K562 (cell line): ENCODE measurements at regions of chr5 and their contacts with region 1.

Region 1: GRCh38 chr5:150560401-150561193 is 52.7 kb downstream of the NDST1 start:
- DNase-seq: peak; percentile 87 to 90 (median 90)
- ATAC-seq: peak; percentile 96
- H3K4me3 ChIP-seq: no peak overlapping the region
- H3K27ac ChIP-seq: no peak overlapping the region
- H3K4me1 ChIP-seq: peaks cover 0 to 4% of the 10 kb centered on the region in 2 experiments; a peak in 1 of 5 replicates
- H3K27me3 ChIP-seq: no peaks in the 10 kb centered on the region
- CTCF ChIP-seq: peak; percentile 78 to 93 (median 87)
- EP300 ChIP-seq: peak; percentile 40; the same call in 1 of the 2 replicates
- POLR2A ChIP-seq: no peak
- RAD21 ChIP-seq: peak; percentile 92 to 95

Region 2: GRCh38 chr5:150497274-150497988 is 63.2 kb before region 1 on chr5:
- CTCF ChIA-PET with region 1: no interaction called
- POLR2A ChIA-PET with region 1: no interaction called
- in situ Hi-C with region 1: no loop called
- intact Hi-C with region 1: no loop called
- DNase-seq: no peak
- ATAC-seq: no peak
- H3K4me3 ChIP-seq: no peak overlapping the region
- H3K27ac ChIP-seq: no peak overlapping the region
- H3K4me1 ChIP-seq: peaks cover 31 to 48% of the 10 kb centered on the region in 2 experiments; a peak in 4 of 5 replicates
- H3K27me3 ChIP-seq: no peaks in the 10 kb centered on the region
- CTCF ChIP-seq: no peak
- EP300 ChIP-seq: no peak
- POLR2A ChIP-seq: no peak
- RAD21 ChIP-seq: no peak

Region 3: GRCh38 chr5:150656191-150657132 is 95.9 kb after region 1 on chr5:
- CTCF ChIA-PET with region 1: interaction called, 27 read pairs
- POLR2A ChIA-PET with region 1: interaction called, 4 read pairs
- in situ Hi-C with region 1: loop called (anchors 5 kb)
- intact Hi-C with region 1: loop called (anchors 1 kb)
- DNase-seq: peak; percentile 88 to 99 (median 98)
- ATAC-seq: peak; percentile 91
- H3K4me3 ChIP-seq: peak overlapping the region; percentile 64
- H3K27ac ChIP-seq: 0 out of 3 replicates have a peak overlapping the region, but pooled peaks have one; percentile 19
- H3K4me1 ChIP-seq: peaks cover 9 to 13% of the 10 kb centered on the region in 2 experiments; a peak in 4 of 5 replicates
- H3K27me3 ChIP-seq: peaks cover 6 to 50% of the 10 kb centered on the region in 2 experiments
- CTCF ChIP-seq: peak; percentile 44 to 90 (median 77); a peak in 5 of 6 replicates
- EP300 ChIP-seq: no peak
- POLR2A ChIP-seq: peak; percentile 48; the same call in 1 of the 2 replicates
- RAD21 ChIP-seq: peak; percentile 70 to 79

Region 4: DNA sequence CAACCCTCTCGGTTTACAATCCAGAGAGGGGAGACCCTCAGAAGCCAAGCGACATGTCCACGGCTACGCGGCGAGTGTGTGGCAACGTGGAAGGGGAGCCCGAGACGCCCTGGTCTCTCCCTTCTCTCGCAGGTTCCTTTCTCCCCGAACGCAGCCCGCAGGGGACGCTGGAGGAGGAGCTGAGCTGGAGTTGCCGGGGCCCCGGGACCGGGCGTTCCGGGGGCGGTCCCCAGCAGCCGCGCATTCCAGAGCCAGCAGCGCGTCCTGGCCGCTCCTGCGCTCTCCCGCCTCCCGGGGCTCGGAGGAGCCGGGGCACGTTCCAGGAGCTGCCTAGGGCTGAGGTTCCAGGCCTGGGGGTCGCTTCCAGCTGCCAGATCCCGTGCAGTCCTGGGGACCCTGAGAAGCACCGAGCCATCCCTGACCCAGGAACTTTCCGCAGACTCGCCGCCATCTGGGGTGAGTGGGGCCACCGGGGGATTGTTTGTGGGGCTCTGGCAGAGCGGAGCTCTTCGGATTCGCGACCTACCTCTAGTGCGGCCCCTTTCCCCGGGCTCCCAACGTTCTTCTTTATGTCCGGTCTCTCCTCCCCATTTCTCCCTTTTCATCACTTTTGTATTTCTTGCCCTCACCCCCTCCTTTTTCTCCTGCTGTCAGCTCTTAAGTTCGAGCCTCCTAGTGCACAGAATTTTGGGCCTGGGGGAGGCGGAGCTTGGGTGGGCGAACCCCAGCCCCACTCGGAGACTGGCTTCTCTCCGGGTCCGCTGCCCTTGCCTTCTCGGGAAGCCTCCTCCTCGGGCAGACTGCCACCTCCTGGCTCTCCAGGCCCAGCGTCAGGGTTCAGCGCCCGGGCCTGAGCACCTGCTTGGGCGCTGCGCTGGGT is 218.2 kb after region 1 on chr5 and contains the start of gene SMIM3:
- CTCF ChIA-PET with region 1: interaction called, 5 read pairs
- POLR2A ChIA-PET with region 1: no interaction called
- in situ Hi-C with region 1: no loop called
- intact Hi-C with region 1: loop called (anchors 1 kb)
- DNase-seq: peak; percentile 79 to 83 (median 82)
- ATAC-seq: peak; percentile 92
- H3K4me3 ChIP-seq: peak within 1 kb of the TSS; percentile 72
- H3K27ac ChIP-seq: peak within 1 kb of the TSS; percentile 72
- H3K4me1 ChIP-seq: peaks cover 21 to 32% of the 10 kb centered on the region in 2 experiments
- H3K27me3 ChIP-seq: no peaks in the 10 kb centered on the region
- CTCF ChIP-seq: peak; percentile 71 to 81 (median 80)
- EP300 ChIP-seq: peak; percentile 7; the same call in 1 of the 2 replicates
- POLR2A ChIP-seq: peak; percentile 67
- RAD21 ChIP-seq: peak; percentile 82 to 86
- polyA plus RNA-seq, gene SMIM3: 4.1 to 6.7 TPM

Region 5: DNA sequence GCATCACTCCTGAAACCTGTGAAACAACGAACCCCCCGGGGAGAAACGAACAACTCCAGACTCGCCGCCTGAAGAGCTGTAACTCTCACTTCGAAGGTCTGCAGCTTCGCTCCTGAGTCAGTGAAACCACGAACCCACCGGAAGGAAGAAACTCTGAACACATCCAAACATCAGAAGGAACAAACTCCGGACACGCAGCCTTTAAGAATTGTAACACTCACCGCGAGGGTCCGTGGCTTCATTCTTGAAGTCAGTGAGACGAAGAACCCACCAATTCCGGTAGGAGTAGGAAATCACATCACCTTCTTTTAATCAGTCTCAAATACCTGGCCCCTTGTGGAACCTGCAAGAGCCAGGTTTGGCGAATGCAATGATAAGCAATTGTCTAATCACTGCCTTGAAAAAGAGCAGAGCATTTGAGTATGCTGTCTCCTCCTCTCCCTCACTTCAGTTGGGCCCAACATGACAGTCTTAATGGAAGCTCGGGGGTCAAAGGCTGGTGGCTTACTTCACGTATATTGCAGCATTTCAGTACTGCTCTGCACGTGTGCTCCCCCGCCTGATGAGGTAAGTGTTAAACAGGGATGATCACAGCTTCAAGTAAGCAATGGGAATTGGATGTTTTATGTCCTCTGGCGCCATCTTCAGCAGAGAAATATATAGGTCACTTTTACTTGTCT is 286.2 kb after region 1 on chr5:
- CTCF ChIA-PET with region 1: interaction called, 26 read pairs
- POLR2A ChIA-PET with region 1: no interaction called
- in situ Hi-C with region 1: loop called (anchors 5 kb)
- intact Hi-C with region 1: loop called (anchors 1 kb)
- DNase-seq: peak; percentile 58 to 84 (median 62)
- ATAC-seq: peak; percentile 97
- H3K4me3 ChIP-seq: no peak overlapping the region
- H3K27ac ChIP-seq: 0 out of 3 replicates have a peak overlapping the region, but pooled peaks have one; percentile 12
- H3K4me1 ChIP-seq: peaks cover 0 to 5% of the 10 kb centered on the region in 2 experiments; a peak in 3 of 5 replicates
- H3K27me3 ChIP-seq: peaks cover 0 to 14% of the 10 kb centered on the region in 2 experiments; a peak in 3 of 5 replicates
- CTCF ChIP-seq: peak; percentile 71 to 96 (median 84)
- EP300 ChIP-seq: no peak
- POLR2A ChIP-seq: no peak
- RAD21 ChIP-seq: peak; percentile 90 to 96

Region 6: GRCh38 chr5:151164686-151165392 is 604.2 kb after region 1 on chr5:
- CTCF ChIA-PET with region 1: no interaction called
- POLR2A ChIA-PET with region 1: no interaction called
- in situ Hi-C with region 1: no loop called
- intact Hi-C with region 1: loop called (anchors 10 kb)
- DNase-seq: peak; percentile 64 to 87 (median 71)
- ATAC-seq: peak; percentile 99
- H3K4me3 ChIP-seq: no peak overlapping the region
- H3K27ac ChIP-seq: no peak overlapping the region
- H3K4me1 ChIP-seq: no peaks in the 10 kb centered on the region; a peak in 1 of 5 replicates
- H3K27me3 ChIP-seq: peaks cover 2 to 11% of the 10 kb centered on the region in 2 experiments; a peak in 3 of 5 replicates
- CTCF ChIP-seq: peak; percentile 91 to 98 (median 93)
- EP300 ChIP-seq: no peak
- POLR2A ChIP-seq: no peak
- RAD21 ChIP-seq: peak; percentile 96 to 98